ENCODE measurements at regions of chr12 and their contacts with region 1.

Region 1: GRCh38 chr12:71536279-71536938 is 96.8 kb downstream of the LGR5 start:
- DNase-seq: no peak
- ATAC-seq: no peak
- H3K4me3 ChIP-seq: no peak overlapping the region
- H3K4me3 Mint-ChIP-seq: no peak overlapping the region
- H3K27ac ChIP-seq: no peak overlapping the region
- H3K27ac Mint-ChIP-seq: no peak overlapping the region
- H3K4me1 ChIP-seq: peaks cover 0 to 5% of the 10 kb centered on the region in 2 experiments
- H3K4me1 Mint-ChIP-seq: peaks cover 0 to 3% (median 2%) of the 10 kb centered on the region in 3 donors
- H3K27me3 ChIP-seq: no peaks in the 10 kb centered on the region
- H3K27me3 Mint-ChIP-seq: no peaks in the 10 kb centered on the region

Region 2: GRCh38 chr12:71440763-71441748 is 95.4 kb before region 1 on chr12:
- CTCF ChIA-PET with region 1: no interaction called
- POLR2A ChIA-PET with region 1: interaction called in 1 of 2 experiments, 12 read pairs
- DNase-seq: no peak
- ATAC-seq: no peak
- H3K4me3 ChIP-seq: peak overlapping the region in 1 of 2 donors; percentile 52
- H3K4me3 Mint-ChIP-seq: peak overlapping the region; percentile 54 to 86 (median 67)
- H3K27ac ChIP-seq: no peak overlapping the region
- H3K27ac Mint-ChIP-seq: no peak overlapping the region
- H3K4me1 ChIP-seq: peaks cover 3 to 21% of the 10 kb centered on the region in 2 experiments
- H3K4me1 Mint-ChIP-seq: peaks cover 22 to 26% (median 24%) of the 10 kb centered on the region in 3 donors
- H3K27me3 ChIP-seq: peaks cover 2 to 32% of the 10 kb centered on the region in 2 experiments
- H3K27me3 Mint-ChIP-seq: peaks cover 58% of the 10 kb centered on the region in 2 donors